Caco-2 (cell line): ENCODE measurements at regions of chr3 and their contacts with region 1.

Region 1: DNA sequence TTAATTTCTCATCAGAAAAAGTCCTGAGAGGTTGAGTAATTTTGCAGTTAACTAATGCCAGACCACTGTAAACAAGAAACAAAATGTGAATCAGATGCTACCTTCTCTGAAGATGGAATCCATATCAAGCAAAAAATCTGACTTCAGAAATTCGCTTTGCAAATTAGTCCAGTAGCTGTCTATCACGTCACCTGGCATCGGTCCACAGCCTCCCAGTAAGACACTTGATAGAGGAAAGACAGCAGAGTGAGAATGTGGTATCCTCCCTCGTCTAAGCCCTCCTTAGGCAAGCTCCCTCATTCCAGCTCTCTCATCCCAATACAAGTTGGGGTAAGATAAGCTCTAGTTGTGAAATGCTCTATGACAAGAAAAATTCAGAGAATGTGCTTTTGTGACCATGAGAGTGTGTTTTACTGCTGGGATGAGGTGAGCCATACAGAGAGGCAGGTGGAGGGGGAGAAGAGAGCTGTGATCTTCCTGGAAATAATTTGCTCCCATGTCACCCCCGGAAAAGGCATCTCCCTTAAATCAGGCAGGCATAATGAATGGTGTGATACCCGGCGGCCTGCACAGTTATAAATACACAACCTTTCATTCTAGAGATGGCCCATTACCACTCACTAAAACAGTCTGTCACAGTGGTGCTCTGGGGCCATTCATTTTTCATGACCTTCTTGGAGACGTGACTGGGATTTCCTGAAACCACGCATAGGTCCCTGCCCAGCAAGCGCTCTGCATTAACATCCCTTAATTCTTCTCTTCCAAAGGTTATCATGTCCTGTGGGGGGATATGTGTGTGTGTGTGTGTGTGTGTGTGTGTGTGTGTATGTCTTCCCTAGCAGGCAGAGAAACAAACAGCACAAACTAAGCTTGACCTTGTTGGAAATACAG is 602.0 kb upstream of the KCNMB2 start:
- DNase-seq: peak; percentile 36 to 41
- H3K4me3 ChIP-seq: no peak overlapping the region
- H3K4me3 Mint-ChIP-seq: no peak overlapping the region
- H3K27ac Mint-ChIP-seq: peak overlapping the region; percentile 81
- H3K4me1 ChIP-seq: peaks cover 15% of the 10 kb centered on the region
- H3K4me1 Mint-ChIP-seq: peaks cover 19% of the 10 kb centered on the region
- H3K27me3 ChIP-seq: no peaks in the 10 kb centered on the region
- H3K27me3 Mint-ChIP-seq: no peaks in the 10 kb centered on the region
- CTCF ChIP-seq: no peak

Region 2: GRCh38 chr3:177992993-177993970 is 59.0 kb after region 1 on chr3:
- CTCF ChIA-PET with region 1: no interaction called
- POLR2A ChIA-PET with region 1: no interaction called
- intact Hi-C with region 1: loop called (anchors 2 kb)
- DNase-seq: peak; percentile 27 to 58
- H3K4me3 ChIP-seq: no peak overlapping the region
- H3K4me3 Mint-ChIP-seq: no peak overlapping the region
- H3K27ac Mint-ChIP-seq: peak overlapping the region; percentile 71
- H3K4me1 ChIP-seq: peaks cover 25% of the 10 kb centered on the region
- H3K4me1 Mint-ChIP-seq: peaks cover 6% of the 10 kb centered on the region
- H3K27me3 ChIP-seq: no peaks in the 10 kb centered on the region
- H3K27me3 Mint-ChIP-seq: no peaks in the 10 kb centered on the region
- CTCF ChIP-seq: no peak

Region 3: GRCh38 chr3:178325330-178325729 is 391.1 kb after region 1 on chr3:
- CTCF ChIA-PET with region 1: no interaction called
- POLR2A ChIA-PET with region 1: no interaction called
- intact Hi-C with region 1: no loop called
- DNase-seq: no peak
- H3K4me3 ChIP-seq: no peak overlapping the region
- H3K4me3 Mint-ChIP-seq: no peak overlapping the region
- H3K27ac Mint-ChIP-seq: no peak overlapping the region
- H3K4me1 ChIP-seq: peaks cover 13% of the 10 kb centered on the region
- H3K4me1 Mint-ChIP-seq: no peaks in the 10 kb centered on the region
- H3K27me3 ChIP-seq: no peaks in the 10 kb centered on the region
- H3K27me3 Mint-ChIP-seq: no peaks in the 10 kb centered on the region
- CTCF ChIP-seq: peak; percentile 19 to 34